OCI-LY7 (cell line): ENCODE measurements at regions of chr1 and their contacts with region 1.

Region 1: GRCh38 chr1:155017041-155017945 is 14.7 kb downstream of the ZBTB7B start:
- DNase-seq: peak; percentile 89
- H3K4me3 ChIP-seq: peak overlapping the region; percentile 64
- H3K27ac ChIP-seq: peak overlapping the region; percentile 79
- H3K4me1 ChIP-seq: peaks cover 66% of the 10 kb centered on the region
- CTCF ChIP-seq: peak; percentile 100

Region 2: DNA sequence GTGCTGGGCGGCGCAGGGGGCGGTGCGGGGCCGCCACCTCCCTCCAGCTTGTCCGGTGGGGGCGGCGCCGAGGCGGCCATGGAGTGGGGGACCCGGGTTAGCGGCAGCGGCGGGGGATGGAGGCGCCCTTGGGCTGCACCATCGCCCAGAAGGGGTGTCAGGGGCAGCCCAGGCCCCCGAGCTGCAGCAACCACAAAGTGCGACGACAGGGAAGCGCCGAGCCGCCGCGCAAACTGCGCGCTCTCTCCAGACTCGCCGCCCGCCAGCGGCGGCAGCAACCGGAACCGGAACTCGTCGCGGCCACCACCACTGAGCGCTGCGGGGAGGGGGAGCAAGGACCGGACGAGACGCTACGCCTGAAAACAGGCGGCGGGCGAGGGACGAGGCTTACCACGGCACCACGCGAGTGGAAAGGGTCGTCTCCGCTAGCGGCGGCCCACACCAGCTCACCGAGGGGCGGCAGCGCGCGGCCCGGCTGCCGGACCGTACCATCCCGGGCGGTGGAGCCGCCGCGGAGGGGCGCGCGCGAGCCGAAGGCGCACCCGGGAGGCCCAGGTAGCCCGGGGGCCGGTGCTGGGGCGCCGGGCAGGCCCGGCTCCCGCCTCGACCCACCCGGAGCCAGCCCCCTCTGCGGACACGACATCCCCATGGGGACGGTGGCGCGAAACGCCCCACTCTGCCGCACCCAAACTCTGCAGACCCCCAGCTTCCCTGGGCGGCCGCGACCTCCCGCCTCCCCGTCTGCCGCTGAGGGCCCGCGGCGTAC is 55.6 kb before region 1 on chr1 and contains the start of gene PYGO2:
- CTCF ChIA-PET with region 1: interaction called, 3 read pairs
- POLR2A ChIA-PET with region 1: no interaction called
- intact Hi-C with region 1: loop called (anchors 2 kb)
- DNase-seq: peak; percentile 88
- H3K4me3 ChIP-seq: peak within 1 kb of the TSS; percentile 82
- H3K27ac ChIP-seq: peak within 1 kb of the TSS; percentile 77
- H3K4me1 ChIP-seq: peaks cover 33% of the 10 kb centered on the region
- CTCF ChIP-seq: peak; percentile 80
- total RNA-seq, gene PYGO2: 36.5 and 44.3 TPM in 2 replicates

Region 3: GRCh38 chr1:154982897-154983648 is 34.2 kb before region 1 on chr1 and contains the start of gene FLAD1:
- CTCF ChIA-PET with region 1: interaction called, 3 read pairs
- POLR2A ChIA-PET with region 1: interaction called, 3 read pairs
- intact Hi-C with region 1: loop called (anchors 1 kb)
- DNase-seq: peak; percentile 100
- H3K4me3 ChIP-seq: peak within 1 kb of the TSS; percentile 77
- H3K27ac ChIP-seq: peak within 1 kb of the TSS; percentile 80
- H3K4me1 ChIP-seq: peaks cover 21% of the 10 kb centered on the region
- CTCF ChIP-seq: no peak
- total RNA-seq, gene FLAD1: 52.7 and 55.7 TPM in 2 replicates